ENCODE measurements at regions of chr18 and their contacts with region 1.

Region 1: GRCh38 chr18:29041976-29042375 is 865.0 kb upstream of the CDH2 start:
- DNase-seq: no peak
- ATAC-seq: no peak
- H3K4me3 ChIP-seq: no peak overlapping the region
- H3K27ac ChIP-seq: no peak overlapping the region
- H3K4me1 ChIP-seq: no peaks in the 10 kb centered on the region
- H3K27me3 ChIP-seq: no peaks in the 10 kb centered on the region
- CTCF ChIP-seq: no peak
- EP300 ChIP-seq: no peak
- POLR2A ChIP-seq: no peak
- RAD21 ChIP-seq: no peak

Region 2: DNA sequence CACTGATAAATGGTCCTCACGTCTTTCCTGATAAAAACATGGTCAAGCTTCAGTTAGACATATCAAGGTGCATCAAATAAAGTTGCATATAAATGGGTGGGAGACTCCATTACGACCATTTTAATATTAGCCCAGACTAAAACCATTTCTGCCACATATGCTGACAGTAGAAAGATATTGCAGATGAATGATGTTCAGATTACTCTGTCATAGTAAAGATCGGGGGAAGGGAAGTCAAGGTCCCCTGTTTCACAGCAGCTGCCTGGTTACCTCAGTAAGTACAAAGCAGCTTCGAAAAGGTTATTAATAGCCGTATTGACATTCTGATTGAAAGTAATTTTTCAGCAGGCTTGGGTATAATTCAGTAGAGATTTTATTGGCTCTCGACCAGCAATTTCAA is 62.7 kb after region 1 on chr18:
- CTCF ChIA-PET with region 1: no interaction called
- POLR2A ChIA-PET with region 1: no interaction called
- RAD21 ChIA-PET with region 1: no interaction called
- SMC1A ChIA-PET with region 1: no interaction called
- in situ Hi-C with region 1: no loop called
- intact Hi-C with region 1: loop called (anchors 10 kb)
- DNase-seq: no peak
- ATAC-seq: no peak
- H3K4me3 ChIP-seq: no peak overlapping the region
- H3K27ac ChIP-seq: no peak overlapping the region
- H3K4me1 ChIP-seq: no peaks in the 10 kb centered on the region
- H3K27me3 ChIP-seq: no peaks in the 10 kb centered on the region
- CTCF ChIP-seq: no peak
- EP300 ChIP-seq: no peak
- POLR2A ChIP-seq: no peak
- RAD21 ChIP-seq: no peak